ENCODE measurements at regions of chr12 and their contacts with region 1.

Region 1: DNA sequence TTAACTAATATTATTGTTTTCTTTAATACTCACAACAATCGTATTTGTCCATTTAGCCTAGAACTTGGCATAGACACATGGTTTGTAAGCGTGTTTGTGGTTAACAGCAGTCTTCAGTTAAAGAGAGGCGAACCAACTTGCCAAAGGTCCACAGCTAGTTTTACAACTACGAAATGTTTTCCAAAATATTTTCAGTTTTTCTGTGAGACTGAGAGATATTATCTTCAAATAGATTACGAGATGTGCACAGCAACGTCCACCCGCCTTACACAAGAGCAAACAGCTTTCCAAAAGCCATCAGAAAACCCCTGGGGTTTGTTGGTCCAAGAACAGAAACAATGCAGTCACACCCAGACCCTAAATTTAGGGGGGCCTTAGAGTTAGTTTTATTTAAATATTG is 58.6 kb upstream of the RASSF3 start:
- DNase-seq: no peak
- H3K4me3 ChIP-seq: no peak overlapping the region
- H3K27ac ChIP-seq: no peak overlapping the region
- H3K4me1 ChIP-seq: peaks cover 0 to 2% (median 0%) of the 10 kb centered on the region in 4 donors
- H3K27me3 ChIP-seq: no peaks in the 10 kb centered on the region
- CTCF ChIP-seq: no peak

Region 2: GRCh38 chr12:64522316-64522715 is 29.4 kb before region 1 on chr12:
- intact Hi-C with region 1: no loop called
- DNase-seq: no peak
- H3K4me3 ChIP-seq: no peak overlapping the region
- H3K27ac ChIP-seq: no peak overlapping the region
- H3K4me1 ChIP-seq: no peaks in the 10 kb centered on the region
- H3K27me3 ChIP-seq: no peaks in the 10 kb centered on the region
- CTCF ChIP-seq: no peak

Region 3: DNA sequence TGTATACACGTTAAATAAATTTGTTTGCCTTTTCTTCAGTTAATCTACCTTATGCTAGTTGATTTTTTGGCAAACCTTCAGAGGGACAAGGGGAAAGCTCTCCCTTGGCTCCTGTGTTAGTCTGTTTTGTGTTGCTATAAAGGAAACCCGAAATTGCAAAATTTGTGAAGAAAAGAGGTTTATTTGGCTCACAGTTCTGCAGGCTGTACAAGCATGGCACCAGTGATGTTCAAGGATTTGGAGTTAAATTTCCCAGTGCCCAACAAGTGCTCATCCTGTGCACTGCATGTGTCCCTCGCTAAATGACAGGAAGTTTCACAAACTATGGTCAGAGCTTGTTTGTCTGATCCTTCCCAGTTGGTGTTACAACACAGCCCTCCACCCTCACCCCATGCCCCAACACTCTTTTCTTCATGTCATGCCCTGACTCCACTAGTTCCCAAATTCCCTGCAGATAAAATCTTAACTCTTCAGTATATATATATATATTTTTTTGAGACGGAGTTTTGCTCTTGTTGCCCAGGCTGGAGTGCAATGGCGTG is 44.6 kb after region 1 on chr12:
- intact Hi-C with region 1: loop called (anchors 5 kb)
- DNase-seq: no peak
- H3K4me3 ChIP-seq: no peak overlapping the region
- H3K27ac ChIP-seq: no peak overlapping the region
- H3K4me1 ChIP-seq: no peaks in the 10 kb centered on the region
- H3K27me3 ChIP-seq: no peaks in the 10 kb centered on the region
- CTCF ChIP-seq: no peak